HepG2 (cell line): ENCODE measurements at regions of chr1 and their contacts with region 1.

Region 1: GRCh38 chr1:28642847-28643635 is at the start of gene TAF12:
- DNase-seq: peak; percentile 90
- ATAC-seq: peak; percentile 90
- H3K4me3 ChIP-seq: peak within 1 kb of the TSS; percentile 90 to 99 (median 91)
- H3K27ac ChIP-seq: peak within 1 kb of the TSS; percentile 87
- H3K4me1 ChIP-seq: peaks cover 56% of the 10 kb centered on the region
- H3K27me3 ChIP-seq: no peaks in the 10 kb centered on the region; a peak in 1 of 5 replicates
- CTCF ChIP-seq: peak; percentile 88
- EP300 ChIP-seq: peak in 1 of 2 experiments; percentile 28; a peak in 1 of 4 replicates
- POLR2A ChIP-seq: peak; percentile 97 to 99
- RAD21 ChIP-seq: peak; percentile 60
- total RNA-seq, gene TAF12: 17.1 and 24.2 TPM in 2 replicates

Region 2: DNA sequence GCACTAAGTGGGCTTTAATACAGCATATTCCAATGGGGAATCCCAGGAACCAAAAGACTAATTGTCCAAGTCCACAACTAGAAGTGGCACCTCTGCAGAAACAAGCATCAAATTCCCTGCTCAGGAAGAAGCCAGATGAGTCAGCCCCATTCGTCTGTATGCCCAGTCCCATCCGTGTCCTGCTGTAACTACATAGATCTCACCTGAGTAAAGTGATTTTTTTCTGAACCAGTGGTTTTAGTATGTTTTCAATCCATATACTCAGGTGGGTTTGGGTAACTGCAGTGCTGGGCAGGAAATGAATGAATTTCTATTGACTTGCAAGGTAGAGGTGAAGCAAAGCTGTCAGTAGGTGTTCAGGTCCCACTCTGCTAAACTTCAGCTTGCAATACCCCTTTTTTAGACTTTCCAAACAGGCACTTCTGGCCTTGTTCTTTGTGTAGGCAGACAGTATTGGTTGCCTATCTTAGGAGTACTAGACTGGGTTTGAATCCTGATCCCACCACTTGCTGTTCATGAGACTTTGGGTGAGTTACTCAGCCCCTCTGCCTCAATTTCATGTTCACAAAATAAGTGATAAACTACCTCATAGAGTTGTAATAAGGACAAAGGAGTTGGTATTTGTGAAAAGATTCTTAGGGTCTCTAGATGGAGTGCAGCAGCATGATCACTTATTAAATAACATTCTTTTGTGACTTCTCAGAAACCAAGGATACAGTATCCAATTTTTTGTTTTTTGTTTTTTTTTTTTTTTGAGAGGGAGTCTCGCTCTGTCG is 132.2 kb before region 1 on chr1:
- CTCF ChIA-PET with region 1: no interaction called
- POLR2A ChIA-PET with region 1: interaction called, 15 read pairs
- in situ Hi-C with region 1: no loop called
- intact Hi-C with region 1: no loop called
- DNase-seq: peak; percentile 55
- ATAC-seq: peak; percentile 2
- H3K4me3 ChIP-seq: peak overlapping the region in 1 of 3 experiments; percentile 97; a peak in 1 of 6 replicates
- H3K27ac ChIP-seq: peak overlapping the region; percentile 86
- H3K4me1 ChIP-seq: peaks cover 50% of the 10 kb centered on the region
- H3K27me3 ChIP-seq: no peaks in the 10 kb centered on the region; a peak in 1 of 5 replicates
- CTCF ChIP-seq: no peak
- EP300 ChIP-seq: no peak
- POLR2A ChIP-seq: peak; percentile 64 to 95
- RAD21 ChIP-seq: peak; percentile 26

Region 3: GRCh38 chr1:28668191-28668955 is 25.3 kb after region 1 on chr1 and contains the start of gene GMEB1:
- CTCF ChIA-PET with region 1: no interaction called
- POLR2A ChIA-PET with region 1: interaction called, 115 read pairs
- in situ Hi-C with region 1: no loop called
- intact Hi-C with region 1: no loop called
- DNase-seq: peak; percentile 73
- ATAC-seq: peak; percentile 80
- H3K4me3 ChIP-seq: peak within 1 kb of the TSS; percentile 81 to 97 (median 92)
- H3K27ac ChIP-seq: peak within 1 kb of the TSS; percentile 97
- H3K4me1 ChIP-seq: peaks cover 39% of the 10 kb centered on the region
- H3K27me3 ChIP-seq: peaks cover 0 to 4% of the 10 kb centered on the region in 2 experiments; a peak in 2 of 5 replicates
- CTCF ChIP-seq: no peak
- EP300 ChIP-seq: no peak
- POLR2A ChIP-seq: peak in 1 of 2 experiments; percentile 39; a peak in 2 of 4 replicates
- RAD21 ChIP-seq: no peak
- total RNA-seq, gene GMEB1: 6.0 and 7.4 TPM in 2 replicates

Region 4: GRCh38 chr1:28736450-28737306 is 93.6 kb after region 1 on chr1 and contains the start of gene YTHDF2:
- CTCF ChIA-PET with region 1: interaction called, 3 read pairs
- POLR2A ChIA-PET with region 1: interaction called, 89 read pairs
- in situ Hi-C with region 1: no loop called
- intact Hi-C with region 1: loop called (anchors 1 kb)
- DNase-seq: peak; percentile 96
- ATAC-seq: peak; percentile 88
- H3K4me3 ChIP-seq: peak within 1 kb of the TSS; percentile 75 to 95 (median 89)
- H3K27ac ChIP-seq: peak within 1 kb of the TSS; percentile 97
- H3K4me1 ChIP-seq: peaks cover 66% of the 10 kb centered on the region
- H3K27me3 ChIP-seq: no peaks in the 10 kb centered on the region; a peak in 1 of 5 replicates
- CTCF ChIP-seq: peak; percentile 95
- EP300 ChIP-seq: peak; percentile 31 to 36; a peak in 2 of 4 replicates
- POLR2A ChIP-seq: peak; percentile 57 to 78
- RAD21 ChIP-seq: peak; percentile 69
- total RNA-seq, gene YTHDF2: 59.6 and 84.7 TPM in 2 replicates

Region 5: DNA sequence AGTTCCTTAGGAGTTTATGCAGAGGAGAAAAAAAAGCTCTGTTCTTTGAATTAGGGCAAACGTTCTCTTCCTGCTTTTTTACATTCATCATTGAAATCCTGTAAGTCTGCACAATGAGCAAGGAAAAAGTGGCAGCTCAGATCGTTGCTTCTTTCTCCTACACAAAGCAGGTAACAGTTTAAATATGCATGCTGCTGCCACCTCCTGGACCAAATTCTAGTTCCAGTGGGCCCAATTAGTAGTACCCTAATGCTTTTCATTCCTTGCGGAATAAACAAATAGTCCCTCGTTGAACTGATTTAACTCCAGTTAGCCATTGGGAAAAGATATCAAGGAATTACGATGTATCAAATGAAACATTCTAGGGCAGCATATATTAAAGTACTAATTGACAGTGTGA is 113.8 kb after region 1 on chr1:
- CTCF ChIA-PET with region 1: no interaction called
- POLR2A ChIA-PET with region 1: interaction called, 7 read pairs
- in situ Hi-C with region 1: no loop called
- intact Hi-C with region 1: loop called (anchors 5 kb)
- DNase-seq: no peak
- ATAC-seq: peak; percentile 47; the same call in 2 of the 3 replicates
- H3K4me3 ChIP-seq: no peak overlapping the region
- H3K27ac ChIP-seq: no peak overlapping the region
- H3K4me1 ChIP-seq: peaks cover 50% of the 10 kb centered on the region
- H3K27me3 ChIP-seq: no peaks in the 10 kb centered on the region
- CTCF ChIP-seq: peak; percentile 38; the same call in 1 of the 2 replicates
- EP300 ChIP-seq: no peak
- POLR2A ChIP-seq: no peak
- RAD21 ChIP-seq: no peak

Region 6: DNA sequence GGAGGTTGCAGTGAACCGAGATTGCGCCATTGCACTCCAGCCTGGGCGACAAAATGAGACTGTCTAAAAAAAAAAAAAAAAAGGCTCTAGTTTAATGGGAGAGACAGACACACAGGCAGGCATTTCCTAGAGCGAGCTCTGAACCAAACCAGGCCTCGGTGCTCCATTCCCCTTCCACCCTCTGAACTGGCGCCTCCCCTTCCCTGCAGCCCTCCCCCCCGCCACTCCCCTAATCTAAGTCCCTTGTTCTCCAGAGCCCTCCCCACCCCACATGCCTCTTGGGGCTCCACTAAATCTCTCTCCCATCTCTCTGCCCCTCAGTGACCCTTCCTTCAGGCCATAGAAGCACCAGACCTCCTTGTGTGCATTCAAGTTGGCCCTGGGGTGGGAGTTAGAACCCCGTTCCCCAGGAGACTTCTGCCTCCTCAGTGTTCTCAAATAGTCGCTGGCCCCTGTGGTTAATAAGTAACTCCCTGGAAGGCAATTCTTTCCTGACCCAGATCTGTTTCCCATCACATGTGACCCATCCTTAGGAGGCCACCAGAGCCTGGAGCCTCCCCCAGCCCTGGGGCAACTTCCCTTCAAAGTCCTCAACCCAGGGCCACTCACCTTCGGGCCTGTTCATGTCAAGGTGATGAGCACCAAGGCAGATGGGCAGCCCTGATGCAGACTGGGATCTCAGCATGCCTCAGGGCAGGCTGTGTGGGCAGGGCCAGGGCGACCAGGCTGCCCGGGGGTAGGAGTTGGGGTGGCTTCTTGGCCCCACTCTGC is 228.8 kb after region 1 on chr1:
- CTCF ChIA-PET with region 1: no interaction called
- POLR2A ChIA-PET with region 1: interaction called, 14 read pairs
- in situ Hi-C with region 1: loop called (anchors 5 kb)
- intact Hi-C with region 1: loop called (anchors 5 kb)
- DNase-seq: peak; percentile 68
- ATAC-seq: peak; percentile 81
- H3K4me3 ChIP-seq: peak overlapping the region; percentile 57 to 72 (median 66)
- H3K27ac ChIP-seq: peak overlapping the region; percentile 38
- H3K4me1 ChIP-seq: peaks cover 21% of the 10 kb centered on the region
- H3K27me3 ChIP-seq: peaks cover 0 to 4% of the 10 kb centered on the region in 2 experiments; a peak in 2 of 5 replicates
- CTCF ChIP-seq: no peak
- EP300 ChIP-seq: no peak
- POLR2A ChIP-seq: peak in 1 of 2 experiments; percentile 37; a peak in 1 of 4 replicates
- RAD21 ChIP-seq: no peak

Region 7: DNA sequence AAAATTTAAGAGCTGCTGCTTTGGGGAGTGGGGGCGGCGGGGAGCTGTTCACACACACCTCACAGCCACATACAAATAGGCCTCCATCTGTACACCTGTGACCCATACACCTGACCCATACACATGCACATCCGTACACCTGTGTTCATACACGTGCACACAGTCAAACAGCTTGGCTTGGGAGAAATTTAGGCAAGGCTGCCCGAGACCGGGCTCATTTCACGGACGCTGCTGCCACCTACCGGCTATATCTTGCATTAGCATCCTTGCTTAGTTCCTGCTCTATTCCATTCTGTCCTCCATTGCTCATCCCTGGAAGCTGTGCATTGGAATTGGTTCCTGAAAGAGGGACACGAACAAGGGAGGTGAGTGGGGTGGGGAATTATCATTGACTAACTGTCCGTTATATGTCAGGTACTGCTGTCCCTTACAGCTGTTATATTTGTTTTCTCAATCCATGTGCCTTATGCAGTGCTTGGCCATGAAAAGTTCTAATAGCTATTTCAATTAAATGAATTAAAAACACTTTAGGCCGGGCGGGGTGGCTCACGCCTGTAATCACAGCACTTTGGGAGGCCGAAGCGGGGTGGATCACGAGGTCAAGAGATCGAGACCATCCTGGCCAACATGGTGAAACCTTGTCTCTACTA is 234.2 kb after region 1 on chr1:
- CTCF ChIA-PET with region 1: no interaction called
- POLR2A ChIA-PET with region 1: interaction called, 14 read pairs
- in situ Hi-C with region 1: loop called (anchors 5 kb)
- intact Hi-C with region 1: loop called (anchors 5 kb)
- DNase-seq: peak; percentile 62
- ATAC-seq: peak; percentile 76
- H3K4me3 ChIP-seq: no peak overlapping the region
- H3K27ac ChIP-seq: no peak overlapping the region
- H3K4me1 ChIP-seq: peaks cover 34% of the 10 kb centered on the region
- H3K27me3 ChIP-seq: no peaks in the 10 kb centered on the region; a peak in 1 of 5 replicates
- CTCF ChIP-seq: peak; percentile 98
- EP300 ChIP-seq: no peak
- POLR2A ChIP-seq: no peak
- RAD21 ChIP-seq: peak; percentile 92